AG04450 (cell line): ENCODE measurements at regions of chr19 and their contacts with region 1.

Region 1: GRCh38 chr19:48618916-48619691 is at the starts of genes RPL18 and SPHK2:
- DNase-seq: peak; percentile 100
- H3K4me3 ChIP-seq: peak within 1 kb of the TSS; percentile 97
- H3K27ac ChIP-seq: peak within 1 kb of the TSS; percentile 86
- H3K27me3 ChIP-seq: no peaks in the 10 kb centered on the region
- CTCF ChIP-seq: no peak
- polyA plus RNA-seq, gene RPL18: 1,020 and 1,259 TPM in 2 replicates
- polyA plus RNA-seq, gene SPHK2: 4.6 and 6.1 TPM in 2 replicates

Region 2: DNA sequence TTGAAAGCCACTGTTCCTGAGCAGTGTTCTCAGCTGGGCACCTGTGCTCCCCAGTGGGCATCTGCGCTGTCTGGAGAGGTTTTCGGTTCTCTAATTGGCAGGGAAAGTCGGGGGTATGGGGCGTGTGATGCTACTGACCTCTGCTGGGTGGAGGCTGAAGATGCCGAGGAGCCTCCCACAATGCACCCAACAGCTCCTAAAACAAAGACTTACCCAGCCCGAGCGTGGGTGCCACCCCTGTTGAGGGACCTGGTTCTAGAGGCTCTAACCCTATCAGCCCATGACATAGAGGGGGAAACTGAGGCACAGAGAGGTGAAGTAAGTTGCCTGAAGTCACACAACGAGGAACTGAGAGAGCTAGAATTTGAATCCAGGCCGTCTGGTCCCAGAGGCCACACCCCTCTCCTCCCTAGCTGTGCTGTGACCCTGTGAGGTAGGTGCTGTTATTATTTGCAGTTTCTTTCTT is 10.3 kb before region 1 on chr19:
- CTCF ChIA-PET with region 1: interaction called, 4 read pairs
- POLR2A ChIA-PET with region 1: interaction called, 25 read pairs
- DNase-seq: no peak
- H3K4me3 ChIP-seq: no peak overlapping the region
- H3K27ac ChIP-seq: no peak overlapping the region
- H3K27me3 ChIP-seq: no peaks in the 10 kb centered on the region
- CTCF ChIP-seq: peak; percentile 62

Region 3: DNA sequence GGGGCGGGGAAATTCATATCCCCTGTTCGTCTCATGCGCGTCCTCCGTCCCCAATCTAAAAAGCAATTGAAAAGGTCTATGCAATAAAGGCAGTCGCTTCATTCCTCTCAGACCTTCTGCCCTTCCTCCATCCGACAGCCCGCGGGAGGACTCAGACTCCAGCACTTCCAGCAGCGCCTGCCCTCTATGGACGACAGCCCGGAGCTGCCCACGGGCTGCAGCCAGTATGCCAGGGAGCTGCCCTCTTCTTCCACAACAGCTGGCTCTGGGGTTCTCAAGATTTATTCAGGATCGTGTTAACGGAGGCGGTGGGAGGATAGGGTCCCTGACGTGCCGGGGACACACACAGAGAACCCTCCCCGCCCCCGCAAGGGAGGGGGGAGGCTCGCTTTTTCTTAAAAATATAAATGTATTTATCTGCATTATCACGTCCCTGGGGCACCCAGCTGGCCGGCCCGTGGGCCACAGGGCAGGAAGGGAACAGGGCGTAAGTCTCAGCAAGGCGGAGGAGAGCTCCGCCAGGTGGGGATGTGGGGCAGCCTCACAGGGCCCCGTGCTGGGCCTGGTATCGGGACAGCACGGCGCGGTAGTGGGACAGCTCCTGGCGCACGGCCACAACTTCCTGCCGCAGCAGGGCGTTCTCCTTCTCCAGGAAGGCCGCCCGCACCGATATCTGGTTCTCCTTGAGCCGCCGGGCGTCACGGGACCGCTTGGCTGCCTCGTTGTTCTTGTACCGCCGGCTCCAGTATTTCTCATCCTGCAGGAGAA is 11.4 kb after region 1 on chr19:
- CTCF ChIA-PET with region 1: interaction called, 5 read pairs
- POLR2A ChIA-PET with region 1: interaction called, 14 read pairs
- DNase-seq: no peak
- H3K4me3 ChIP-seq: no peak overlapping the region
- H3K27ac ChIP-seq: peak overlapping the region; percentile 57
- H3K27me3 ChIP-seq: no peaks in the 10 kb centered on the region
- CTCF ChIP-seq: peak; percentile 34

Region 4: GRCh38 chr19:48646001-48646721 is 27.1 kb after region 1 on chr19 and contains the start of gene CA11:
- CTCF ChIA-PET with region 1: no interaction called
- POLR2A ChIA-PET with region 1: interaction called, 11 read pairs
- DNase-seq: no peak
- H3K4me3 ChIP-seq: peak within 1 kb of the TSS; percentile 60
- H3K27ac ChIP-seq: peak within 1 kb of the TSS; percentile 21
- H3K27me3 ChIP-seq: peaks cover 2% of the 10 kb centered on the region
- CTCF ChIP-seq: peak; percentile 84
- polyA plus RNA-seq, gene CA11: 3.7 and 4.3 TPM in 2 replicates